ENCODE measurements at regions of chr1 and their contacts with region 1.

Region 1: GRCh38 chr1:154335025-154335714 is 9.8 kb downstream of the ATP8B2 start:
- DNase-seq: peak; percentile 79 to 89 (median 80)
- ATAC-seq: peak; percentile 95
- H3K4me3 ChIP-seq: no peak overlapping the region
- H3K27ac ChIP-seq: no peak overlapping the region
- H3K4me1 ChIP-seq: peaks cover 0 to 14% of the 10 kb centered on the region in 2 experiments; a peak in 3 of 5 replicates
- H3K27me3 ChIP-seq: no peaks in the 10 kb centered on the region
- CTCF ChIP-seq: peak; percentile 86 to 92 (median 90)
- EP300 ChIP-seq: 0 out of 2 replicates have a peak, but pooled peaks have one; percentile 4
- POLR2A ChIP-seq: no peak
- RAD21 ChIP-seq: peak; percentile 69 to 87

Region 2: DNA sequence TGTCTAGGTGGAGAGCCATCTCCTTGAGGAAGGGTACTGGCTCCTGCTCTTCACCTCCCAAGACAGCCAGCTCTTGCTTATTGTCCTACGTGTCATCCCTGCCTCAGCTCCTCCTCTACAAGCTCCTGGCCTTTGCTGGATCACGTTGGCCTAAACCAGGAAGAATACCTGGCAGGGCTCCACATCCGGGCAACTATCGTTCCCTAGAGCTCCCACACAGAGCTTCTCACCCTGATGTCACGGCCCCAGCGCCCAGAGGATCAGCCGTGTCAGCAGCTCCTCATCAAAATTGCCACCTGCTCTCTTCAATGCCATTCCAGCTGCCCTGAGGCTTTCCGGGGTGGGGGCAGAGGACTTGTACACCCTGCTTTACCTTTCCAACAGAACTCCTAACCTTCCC is 141.3 kb before region 1 on chr1:
- CTCF ChIA-PET with region 1: interaction called, 9 read pairs
- POLR2A ChIA-PET with region 1: no interaction called
- in situ Hi-C with region 1: loop called (anchors 5 kb)
- intact Hi-C with region 1: loop called (anchors 1 kb)
- DNase-seq: no peak
- ATAC-seq: peak; percentile 28
- H3K4me3 ChIP-seq: no peak overlapping the region
- H3K27ac ChIP-seq: no peak overlapping the region
- H3K4me1 ChIP-seq: peaks cover 8 to 21% of the 10 kb centered on the region in 2 experiments; a peak in 4 of 5 replicates
- H3K27me3 ChIP-seq: no peaks in the 10 kb centered on the region
- CTCF ChIP-seq: no peak
- EP300 ChIP-seq: no peak
- POLR2A ChIP-seq: no peak
- RAD21 ChIP-seq: no peak

Region 3: GRCh38 chr1:154198756-154199562 is 136.2 kb before region 1 on chr1:
- CTCF ChIA-PET with region 1: interaction called, 9 read pairs
- POLR2A ChIA-PET with region 1: no interaction called
- in situ Hi-C with region 1: loop called (anchors 5 kb)
- intact Hi-C with region 1: loop called (anchors 1 kb)
- DNase-seq: peak; percentile 73 to 77 (median 76)
- ATAC-seq: peak; percentile 87
- H3K4me3 ChIP-seq: no peak overlapping the region
- H3K27ac ChIP-seq: no peak overlapping the region
- H3K4me1 ChIP-seq: peaks cover 5 to 8% of the 10 kb centered on the region in 2 experiments; a peak in 4 of 5 replicates
- H3K27me3 ChIP-seq: no peaks in the 10 kb centered on the region
- CTCF ChIP-seq: peak; percentile 57 to 73 (median 73)
- EP300 ChIP-seq: no peak
- POLR2A ChIP-seq: no peak
- RAD21 ChIP-seq: peak; percentile 64 to 66

Region 4: GRCh38 chr1:154272217-154272998 is 62.8 kb before region 1 on chr1 and contains the start of gene HAX1:
- CTCF ChIA-PET with region 1: interaction called, 4 read pairs
- POLR2A ChIA-PET with region 1: interaction called, 4 read pairs
- in situ Hi-C with region 1: loop called (anchors 5 kb)
- intact Hi-C with region 1: loop called (anchors 1 kb)
- DNase-seq: peak; percentile 91 to 98 (median 92)
- ATAC-seq: peak; percentile 95
- H3K4me3 ChIP-seq: peak within 1 kb of the TSS; percentile 88
- H3K27ac ChIP-seq: peak within 1 kb of the TSS; percentile 79
- H3K4me1 ChIP-seq: peaks cover 3 to 5% of the 10 kb centered on the region in 2 experiments; a peak in 4 of 5 replicates
- H3K27me3 ChIP-seq: no peaks in the 10 kb centered on the region; a peak in 1 of 5 replicates
- CTCF ChIP-seq: peak; percentile 85 to 97 (median 93)
- EP300 ChIP-seq: peak; percentile 58
- POLR2A ChIP-seq: peak; percentile 89
- RAD21 ChIP-seq: peak; percentile 91 to 97
- polyA plus RNA-seq, gene HAX1: 447 to 492 TPM

Region 5: GRCh38 chr1:154379301-154379700 is 44.1 kb after region 1 on chr1:
- CTCF ChIA-PET with region 1: no interaction called
- POLR2A ChIA-PET with region 1: no interaction called
- in situ Hi-C with region 1: no loop called
- intact Hi-C with region 1: no loop called
- DNase-seq: no peak
- ATAC-seq: no peak
- H3K4me3 ChIP-seq: no peak overlapping the region
- H3K27ac ChIP-seq: no peak overlapping the region
- H3K4me1 ChIP-seq: no peaks in the 10 kb centered on the region; a peak in 3 of 5 replicates
- H3K27me3 ChIP-seq: no peaks in the 10 kb centered on the region
- CTCF ChIP-seq: no peak
- EP300 ChIP-seq: no peak
- POLR2A ChIP-seq: no peak
- RAD21 ChIP-seq: no peak